ENCODE measurements at regions of chr4 and their contacts with region 1.

Region 1: GRCh38 chr4:26150948-26151347 is 169.9 kb upstream of the RBPJ start:
- DNase-seq: peak; percentile 43 to 69 (median 52)
- H3K4me3 ChIP-seq: peak overlapping the region in 1 of 3 experiments; percentile 44
- H3K4me3 Mint-ChIP-seq: peak overlapping the region in 1 of 2 donors; percentile 65
- H3K27ac ChIP-seq: peak overlapping the region in 1 of 2 donors; percentile 77
- H3K27ac Mint-ChIP-seq: peak overlapping the region; percentile 10 to 86 (median 64)
- H3K4me1 ChIP-seq: peaks cover 29 to 34% of the 10 kb centered on the region in 2 donors
- H3K4me1 Mint-ChIP-seq: peaks cover 49% of the 10 kb centered on the region
- H3K27me3 ChIP-seq: no peaks in the 10 kb centered on the region
- H3K27me3 Mint-ChIP-seq: peaks cover 0 to 4% (median 3%) of the 10 kb centered on the region in 3 donors
- CTCF ChIP-seq: no peak

Region 2: GRCh38 chr4:26061248-26061986 is 89.5 kb before region 1 on chr4:
- intact Hi-C with region 1: no loop called
- DNase-seq: peak; percentile 64 to 79 (median 71)
- H3K4me3 ChIP-seq: no peak overlapping the region
- H3K4me3 Mint-ChIP-seq: no peak overlapping the region
- H3K27ac ChIP-seq: no peak overlapping the region
- H3K27ac Mint-ChIP-seq: peak overlapping the region in 3 of 7 donors; percentile 10 to 38 (median 35)
- H3K4me1 ChIP-seq: peaks cover 4% of the 10 kb centered on the region in 2 donors
- H3K4me1 Mint-ChIP-seq: peaks cover 18% of the 10 kb centered on the region
- H3K27me3 ChIP-seq: peaks cover 0 to 2% of the 10 kb centered on the region in 2 donors
- H3K27me3 Mint-ChIP-seq: peaks cover 12 to 22% (median 20%) of the 10 kb centered on the region in 3 donors
- CTCF ChIP-seq: peak; percentile 82

Region 3: GRCh38 chr4:26076000-26076587 is 74.9 kb before region 1 on chr4:
- intact Hi-C with region 1: loop called in 1 of 2 experiments (anchors 5 kb)
- DNase-seq: peak; percentile 92 to 97 (median 95)
- H3K4me3 ChIP-seq: peak overlapping the region in 1 of 3 experiments; percentile 15
- H3K4me3 Mint-ChIP-seq: peak overlapping the region; percentile 6 to 56
- H3K27ac ChIP-seq: peak overlapping the region; percentile 71 to 95
- H3K27ac Mint-ChIP-seq: peak overlapping the region; percentile 98 to 99 (median 98)
- H3K4me1 ChIP-seq: peaks cover 56% of the 10 kb centered on the region in 2 donors
- H3K4me1 Mint-ChIP-seq: peaks cover 65% of the 10 kb centered on the region
- H3K27me3 ChIP-seq: peaks cover 0 to 6% of the 10 kb centered on the region in 2 donors
- H3K27me3 Mint-ChIP-seq: peaks cover 5 to 22% (median 7%) of the 10 kb centered on the region in 3 donors
- CTCF ChIP-seq: no peak

Region 4: GRCh38 chr4:26116092-26116491 is 34.9 kb before region 1 on chr4:
- intact Hi-C with region 1: loop called in 1 of 2 experiments (anchors 5 kb)
- DNase-seq: no peak
- H3K4me3 ChIP-seq: no peak overlapping the region
- H3K4me3 Mint-ChIP-seq: no peak overlapping the region
- H3K27ac ChIP-seq: no peak overlapping the region
- H3K27ac Mint-ChIP-seq: peak overlapping the region in 1 of 7 donors; percentile 16
- H3K4me1 ChIP-seq: peaks cover 6 to 12% of the 10 kb centered on the region in 2 donors
- H3K4me1 Mint-ChIP-seq: peaks cover 9% of the 10 kb centered on the region
- H3K27me3 ChIP-seq: peaks cover 0 to 2% of the 10 kb centered on the region in 2 donors
- H3K27me3 Mint-ChIP-seq: peaks cover 9 to 15% (median 10%) of the 10 kb centered on the region in 3 donors
- CTCF ChIP-seq: no peak

Region 5: GRCh38 chr4:26140150-26140898 is 10.6 kb before region 1 on chr4:
- intact Hi-C with region 1: no loop called
- DNase-seq: no peak
- H3K4me3 ChIP-seq: no peak overlapping the region
- H3K4me3 Mint-ChIP-seq: no peak overlapping the region
- H3K27ac ChIP-seq: no peak overlapping the region
- H3K27ac Mint-ChIP-seq: no peak overlapping the region
- H3K4me1 ChIP-seq: peaks cover 24 to 31% of the 10 kb centered on the region in 2 donors
- H3K4me1 Mint-ChIP-seq: peaks cover 32% of the 10 kb centered on the region
- H3K27me3 ChIP-seq: no peaks in the 10 kb centered on the region
- H3K27me3 Mint-ChIP-seq: peaks cover 0 to 3% (median 2%) of the 10 kb centered on the region in 3 donors
- CTCF ChIP-seq: no peak

Region 6: GRCh38 chr4:26206339-26206738 is 55.4 kb after region 1 on chr4:
- intact Hi-C with region 1: loop called in 1 of 2 experiments (anchors 10 kb)
- DNase-seq: no peak
- H3K4me3 ChIP-seq: no peak overlapping the region
- H3K4me3 Mint-ChIP-seq: no peak overlapping the region
- H3K27ac ChIP-seq: no peak overlapping the region
- H3K27ac Mint-ChIP-seq: no peak overlapping the region
- H3K4me1 ChIP-seq: peaks cover 18 to 25% of the 10 kb centered on the region in 2 donors
- H3K4me1 Mint-ChIP-seq: peaks cover 35% of the 10 kb centered on the region
- H3K27me3 ChIP-seq: no peaks in the 10 kb centered on the region
- H3K27me3 Mint-ChIP-seq: peaks cover 4 to 9% (median 7%) of the 10 kb centered on the region in 3 donors
- CTCF ChIP-seq: no peak

Measured in CD14-positive monocyte (primary cell).